Colonic mucosa (tissue), 4 donors: ENCODE measurements at regions of chr6 and their contacts with region 1.

Region 1: DNA sequence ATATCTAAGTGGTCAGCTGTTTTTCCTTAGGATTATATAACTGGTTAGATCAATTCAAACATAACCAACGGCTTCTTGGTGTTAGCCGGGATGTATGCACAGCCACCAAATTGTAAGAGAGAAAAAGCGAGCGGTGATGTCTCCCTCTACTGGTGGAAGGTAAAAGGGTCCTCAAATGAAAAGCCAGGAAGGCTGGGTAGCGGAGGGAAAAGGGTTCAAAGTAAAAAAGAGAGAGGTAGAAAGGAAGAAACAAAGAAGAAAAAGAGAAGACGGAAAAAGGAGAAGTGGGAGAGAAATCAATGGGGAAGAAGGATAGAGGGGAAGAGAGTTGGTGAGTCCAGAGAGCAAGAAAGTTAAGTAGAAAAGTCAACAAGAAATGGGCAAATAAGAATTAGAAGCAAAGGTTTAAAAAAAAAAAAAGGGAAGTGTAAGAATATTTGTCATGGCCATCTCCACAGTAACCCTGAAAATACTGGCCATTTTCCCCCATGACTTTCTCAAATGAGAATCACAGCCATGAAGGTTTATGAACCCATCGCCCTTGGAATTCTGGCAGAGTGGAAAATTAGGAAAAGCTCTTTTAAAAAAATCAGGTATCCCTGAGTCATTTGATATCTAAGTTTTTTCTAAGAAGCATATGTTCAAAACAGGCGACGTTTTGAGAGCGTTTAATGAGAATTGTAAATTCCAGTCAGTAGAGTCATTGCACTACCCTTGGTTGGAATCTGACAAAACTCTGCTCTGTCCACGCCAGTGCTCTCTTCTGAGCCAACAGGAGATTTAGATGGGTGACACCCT is 155.6 kb upstream of the SNX9 start:
- DNase-seq: peak; percentile 70
- H3K4me3 ChIP-seq: no peak overlapping the region
- H3K27ac ChIP-seq: no peak overlapping the region
- H3K4me1 ChIP-seq: peaks cover 6% of the 10 kb centered on the region
- H3K27me3 ChIP-seq: no peaks in the 10 kb centered on the region
- CTCF ChIP-seq: peak; percentile 74

Region 2: GRCh38 chr6:157314705-157315321 is 352.6 kb before region 1 on chr6:
- intact Hi-C with region 1: loop called (anchors 5 kb)
- DNase-seq: no peak
- H3K4me3 ChIP-seq: no peak overlapping the region
- H3K27ac ChIP-seq: no peak overlapping the region
- H3K4me1 ChIP-seq: no peaks in the 10 kb centered on the region
- H3K27me3 ChIP-seq: no peaks in the 10 kb centered on the region
- CTCF ChIP-seq: peak; percentile 68

Region 3: GRCh38 chr6:157535339-157536222 is 131.8 kb before region 1 on chr6:
- intact Hi-C with region 1: no loop called
- DNase-seq: no peak
- H3K4me3 ChIP-seq: no peak overlapping the region
- H3K27ac ChIP-seq: peak overlapping the region; percentile 18
- H3K4me1 ChIP-seq: peaks cover 13% of the 10 kb centered on the region
- H3K27me3 ChIP-seq: no peaks in the 10 kb centered on the region
- CTCF ChIP-seq: no peak

Region 4: DNA sequence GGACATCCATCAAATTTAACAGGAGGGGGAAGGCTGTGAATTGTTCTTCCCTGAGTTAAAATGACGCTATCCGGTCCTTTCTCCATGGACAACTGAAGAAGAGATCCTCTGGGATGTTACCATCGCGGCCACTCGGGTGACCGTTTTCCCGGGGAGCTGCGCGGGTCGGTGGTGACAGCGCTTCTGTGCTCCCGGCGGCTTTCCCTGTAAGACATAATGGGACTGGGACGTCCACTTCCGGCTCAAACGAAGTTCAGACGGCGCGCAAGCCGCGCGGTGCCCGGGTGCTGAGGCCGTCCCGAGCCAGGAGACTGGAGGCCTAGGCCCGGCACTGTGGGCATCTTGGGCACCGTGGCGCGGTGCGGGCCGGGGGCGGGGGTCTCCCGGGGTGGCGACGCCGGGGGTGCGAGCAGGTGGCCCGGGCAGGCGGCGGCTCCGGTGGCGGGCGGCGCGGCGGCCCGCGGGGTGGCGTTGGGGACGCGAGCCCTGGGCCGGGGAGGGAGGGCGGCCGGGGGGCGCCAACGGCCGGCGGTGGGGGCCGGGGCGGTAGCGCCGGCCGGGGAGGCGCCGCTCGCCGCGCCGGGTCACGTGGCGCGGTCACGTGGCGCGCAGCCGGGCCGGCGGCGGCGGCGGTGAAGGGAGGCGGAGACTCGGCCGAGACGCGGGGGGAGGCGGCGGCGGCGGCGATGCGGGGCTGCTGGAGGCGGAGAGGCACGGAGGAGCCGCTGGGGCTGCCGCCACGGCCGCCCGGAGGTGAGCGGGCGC is 564.3 kb after region 1 on chr6:
- intact Hi-C with region 1: no loop called
- DNase-seq: peak; percentile 76
- H3K4me3 ChIP-seq: peak overlapping the region; percentile 77
- H3K27ac ChIP-seq: peak overlapping the region; percentile 68
- H3K4me1 ChIP-seq: peaks cover 6% of the 10 kb centered on the region
- H3K27me3 ChIP-seq: no peaks in the 10 kb centered on the region
- CTCF ChIP-seq: no peak